Caco-2 (cell line): ENCODE measurements at regions of chr6 and their contacts with region 1.

Region 1: GRCh38 chr6:3162565-3163247 is 5.4 kb upstream of the TUBB2A start:
- DNase-seq: peak; percentile 85 to 89
- H3K4me3 ChIP-seq: peak overlapping the region; percentile 52
- H3K4me3 Mint-ChIP-seq: peak overlapping the region; percentile 78
- H3K27ac Mint-ChIP-seq: peak overlapping the region; percentile 67
- H3K4me1 ChIP-seq: peaks cover 47% of the 10 kb centered on the region
- H3K4me1 Mint-ChIP-seq: peaks cover 39% of the 10 kb centered on the region
- H3K27me3 ChIP-seq: no peaks in the 10 kb centered on the region
- H3K27me3 Mint-ChIP-seq: no peaks in the 10 kb centered on the region
- CTCF ChIP-seq: peak in 1 of 2 experiments; percentile 21

Region 2: GRCh38 chr6:2891768-2892170 is 270.9 kb before region 1 on chr6:
- CTCF ChIA-PET with region 1: no interaction called
- POLR2A ChIA-PET with region 1: no interaction called
- intact Hi-C with region 1: no loop called
- DNase-seq: peak; percentile 92 to 93
- H3K4me3 ChIP-seq: peak overlapping the region; percentile 71
- H3K4me3 Mint-ChIP-seq: peak overlapping the region; percentile 92
- H3K27ac Mint-ChIP-seq: peak overlapping the region; percentile 80
- H3K4me1 ChIP-seq: peaks cover 8% of the 10 kb centered on the region; the same call in 1 of the 2 replicates
- H3K4me1 Mint-ChIP-seq: peaks cover 10% of the 10 kb centered on the region
- H3K27me3 ChIP-seq: no peaks in the 10 kb centered on the region
- H3K27me3 Mint-ChIP-seq: no peaks in the 10 kb centered on the region
- CTCF ChIP-seq: no peak

Region 3: GRCh38 chr6:2952557-2953095 is 210.1 kb before region 1 on chr6:
- CTCF ChIA-PET with region 1: no interaction called
- POLR2A ChIA-PET with region 1: no interaction called
- intact Hi-C with region 1: no loop called
- DNase-seq: peak; percentile 60 to 67
- H3K4me3 ChIP-seq: no peak overlapping the region
- H3K4me3 Mint-ChIP-seq: no peak overlapping the region
- H3K27ac Mint-ChIP-seq: no peak overlapping the region
- H3K4me1 ChIP-seq: peaks cover 4% of the 10 kb centered on the region; the same call in 1 of the 2 replicates
- H3K4me1 Mint-ChIP-seq: peaks cover 8% of the 10 kb centered on the region
- H3K27me3 ChIP-seq: no peaks in the 10 kb centered on the region
- H3K27me3 Mint-ChIP-seq: no peaks in the 10 kb centered on the region
- CTCF ChIP-seq: peak; percentile 46 to 84

Region 4: DNA sequence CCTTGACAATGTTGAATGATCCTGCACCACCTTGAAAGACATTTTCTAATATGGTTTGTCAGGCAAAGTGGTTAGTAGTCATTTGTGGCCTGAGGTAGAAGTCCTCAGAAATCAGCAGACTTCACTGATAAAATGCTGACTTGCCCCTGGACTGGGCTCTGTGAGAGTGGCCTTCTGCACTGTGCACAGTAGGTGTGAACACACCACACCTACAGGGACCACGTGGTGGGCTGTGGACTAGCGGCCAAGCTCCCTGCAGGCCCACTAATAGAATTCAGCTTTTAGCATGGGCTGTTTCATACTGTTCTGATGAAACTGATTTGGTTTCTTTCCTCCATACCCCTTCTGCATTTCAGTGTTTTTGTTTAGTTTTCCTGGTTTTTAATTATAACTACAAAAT is 36.9 kb before region 1 on chr6:
- CTCF ChIA-PET with region 1: interaction called, 5 read pairs
- POLR2A ChIA-PET with region 1: no interaction called
- intact Hi-C with region 1: loop called (anchors 2 kb)
- DNase-seq: no peak
- H3K4me3 ChIP-seq: no peak overlapping the region
- H3K4me3 Mint-ChIP-seq: no peak overlapping the region
- H3K27ac Mint-ChIP-seq: no peak overlapping the region
- H3K4me1 ChIP-seq: peaks cover under 1% of the 10 kb centered on the region; the same call in 1 of the 2 replicates
- H3K4me1 Mint-ChIP-seq: no peaks in the 10 kb centered on the region
- H3K27me3 ChIP-seq: no peaks in the 10 kb centered on the region
- H3K27me3 Mint-ChIP-seq: no peaks in the 10 kb centered on the region
- CTCF ChIP-seq: no peak

Region 5: GRCh38 chr6:3139090-3139903 is 23.4 kb before region 1 on chr6:
- CTCF ChIA-PET with region 1: no interaction called
- POLR2A ChIA-PET with region 1: no interaction called
- intact Hi-C with region 1: loop called (anchors 1 kb)
- DNase-seq: peak; percentile 79 to 85
- H3K4me3 ChIP-seq: no peak overlapping the region
- H3K4me3 Mint-ChIP-seq: peak overlapping the region; percentile 48
- H3K27ac Mint-ChIP-seq: peak overlapping the region; percentile 70
- H3K4me1 ChIP-seq: peaks cover 42% of the 10 kb centered on the region
- H3K4me1 Mint-ChIP-seq: peaks cover 33% of the 10 kb centered on the region
- H3K27me3 ChIP-seq: no peaks in the 10 kb centered on the region
- H3K27me3 Mint-ChIP-seq: no peaks in the 10 kb centered on the region
- CTCF ChIP-seq: no peak

Region 6: DNA sequence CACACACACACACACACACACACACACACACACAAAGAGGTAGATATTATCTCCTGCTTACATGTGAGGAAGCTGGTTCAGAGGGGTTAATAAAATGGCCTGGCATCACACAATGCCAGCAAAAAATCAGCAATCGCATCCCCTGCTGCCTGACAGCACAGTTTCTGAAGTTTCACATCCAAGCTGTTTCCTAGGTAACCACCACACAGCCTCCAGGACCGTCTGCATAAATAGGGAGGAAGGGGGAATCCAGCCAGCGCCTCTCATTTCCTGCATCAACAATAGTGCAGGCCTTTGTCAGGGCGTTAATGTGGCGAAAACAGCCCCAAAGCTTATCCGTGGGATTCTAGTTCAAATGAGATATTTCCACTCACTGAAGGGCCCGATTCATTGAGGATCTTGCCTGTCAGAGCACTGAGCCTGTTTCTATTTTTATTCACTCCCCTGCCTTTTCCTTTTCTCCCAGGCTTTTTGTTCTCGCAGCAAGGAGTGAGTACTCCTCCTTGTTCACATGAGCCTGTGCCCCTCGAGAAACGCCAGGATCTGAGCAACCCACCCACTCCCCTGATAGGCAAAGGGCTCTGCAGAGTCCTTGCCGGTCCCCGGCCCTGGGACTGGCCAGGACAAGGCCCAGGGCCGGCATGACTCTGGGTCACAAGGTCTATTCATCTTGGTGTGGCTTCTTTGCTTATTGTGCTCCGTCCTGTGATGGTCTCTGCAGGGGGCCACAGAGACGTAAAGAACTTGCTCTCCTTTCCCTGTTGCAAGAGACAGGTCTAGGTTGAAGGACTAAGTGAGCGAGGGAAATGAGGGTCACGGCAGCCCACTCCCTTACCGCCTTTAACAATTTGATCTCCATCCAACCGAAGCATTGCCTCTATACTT is 32.1 kb after region 1 on chr6:
- CTCF ChIA-PET with region 1: interaction called, 9 read pairs
- POLR2A ChIA-PET with region 1: no interaction called
- intact Hi-C with region 1: loop called (anchors 2 kb)
- DNase-seq: no peak
- H3K4me3 ChIP-seq: no peak overlapping the region
- H3K4me3 Mint-ChIP-seq: no peak overlapping the region
- H3K27ac Mint-ChIP-seq: no peak overlapping the region
- H3K4me1 ChIP-seq: no peaks in the 10 kb centered on the region
- H3K4me1 Mint-ChIP-seq: no peaks in the 10 kb centered on the region
- H3K27me3 ChIP-seq: no peaks in the 10 kb centered on the region
- H3K27me3 Mint-ChIP-seq: no peaks in the 10 kb centered on the region
- CTCF ChIP-seq: no peak

Region 7: GRCh38 chr6:3209114-3210023 is 46.7 kb after region 1 on chr6:
- CTCF ChIA-PET with region 1: interaction called, 8 read pairs
- POLR2A ChIA-PET with region 1: interaction called, 4 read pairs
- intact Hi-C with region 1: loop called (anchors 1 kb)
- DNase-seq: peak; percentile 64 to 77
- H3K4me3 ChIP-seq: no peak overlapping the region
- H3K4me3 Mint-ChIP-seq: peak overlapping the region; percentile 57
- H3K27ac Mint-ChIP-seq: peak overlapping the region; percentile 10
- H3K4me1 ChIP-seq: 0 out of 2 replicates have a peak, but pooled peaks cover 6% of the 10 kb centered on the region
- H3K4me1 Mint-ChIP-seq: peaks cover 14% of the 10 kb centered on the region
- H3K27me3 ChIP-seq: no peaks in the 10 kb centered on the region
- H3K27me3 Mint-ChIP-seq: no peaks in the 10 kb centered on the region
- CTCF ChIP-seq: no peak

Region 8: DNA sequence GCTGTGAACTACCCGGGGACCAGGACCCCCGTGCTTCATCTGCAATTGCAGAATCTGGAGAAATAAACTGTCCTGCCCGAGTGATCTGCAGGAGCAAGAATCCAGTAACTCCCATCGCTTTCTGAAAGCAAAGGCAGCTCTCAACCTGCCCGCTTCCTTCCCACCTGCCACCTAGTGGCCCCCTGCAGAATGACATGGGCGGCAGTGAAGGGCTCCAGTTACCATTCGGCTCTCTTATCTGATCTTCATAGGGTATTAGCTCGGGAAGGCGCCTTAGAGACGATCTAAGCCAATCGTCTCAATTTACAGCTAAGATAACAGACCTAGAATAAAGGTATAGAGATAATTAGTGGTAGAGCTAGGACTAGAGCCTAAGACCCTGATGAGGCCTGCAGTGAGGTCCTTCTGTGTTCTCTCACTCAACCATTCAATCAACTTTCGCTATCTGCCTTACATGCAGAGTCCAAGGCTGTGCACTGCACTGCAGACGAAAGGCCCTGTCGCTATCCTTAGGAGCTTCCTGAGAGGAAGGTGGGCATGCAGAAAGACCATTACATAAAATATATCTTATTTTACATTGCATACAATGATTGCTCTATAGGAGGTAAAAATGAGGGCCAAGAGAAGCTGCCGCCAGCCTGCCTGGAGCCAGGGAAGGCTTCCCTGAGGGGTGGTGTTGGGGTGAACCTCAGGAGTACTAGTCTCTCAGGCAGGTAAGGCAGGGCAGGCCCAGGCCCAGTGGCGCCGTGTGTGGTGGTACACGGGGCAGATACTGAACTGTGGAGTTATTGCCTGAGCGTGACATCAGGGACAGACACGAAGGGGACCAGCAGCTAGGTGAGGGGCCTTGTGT is 89.0 kb after region 1 on chr6:
- CTCF ChIA-PET with region 1: interaction called, 14 read pairs
- POLR2A ChIA-PET with region 1: interaction called, 15 read pairs
- intact Hi-C with region 1: no loop called
- DNase-seq: peak; percentile 84 to 91
- H3K4me3 ChIP-seq: no peak overlapping the region
- H3K4me3 Mint-ChIP-seq: peak overlapping the region; percentile 59
- H3K27ac Mint-ChIP-seq: peak overlapping the region; percentile 31
- H3K4me1 ChIP-seq: peaks cover 18% of the 10 kb centered on the region
- H3K4me1 Mint-ChIP-seq: peaks cover 5% of the 10 kb centered on the region
- H3K27me3 ChIP-seq: no peaks in the 10 kb centered on the region; the same call in 1 of the 2 replicates
- H3K27me3 Mint-ChIP-seq: no peaks in the 10 kb centered on the region
- CTCF ChIP-seq: peak; percentile 95 to 96

Region 9: DNA sequence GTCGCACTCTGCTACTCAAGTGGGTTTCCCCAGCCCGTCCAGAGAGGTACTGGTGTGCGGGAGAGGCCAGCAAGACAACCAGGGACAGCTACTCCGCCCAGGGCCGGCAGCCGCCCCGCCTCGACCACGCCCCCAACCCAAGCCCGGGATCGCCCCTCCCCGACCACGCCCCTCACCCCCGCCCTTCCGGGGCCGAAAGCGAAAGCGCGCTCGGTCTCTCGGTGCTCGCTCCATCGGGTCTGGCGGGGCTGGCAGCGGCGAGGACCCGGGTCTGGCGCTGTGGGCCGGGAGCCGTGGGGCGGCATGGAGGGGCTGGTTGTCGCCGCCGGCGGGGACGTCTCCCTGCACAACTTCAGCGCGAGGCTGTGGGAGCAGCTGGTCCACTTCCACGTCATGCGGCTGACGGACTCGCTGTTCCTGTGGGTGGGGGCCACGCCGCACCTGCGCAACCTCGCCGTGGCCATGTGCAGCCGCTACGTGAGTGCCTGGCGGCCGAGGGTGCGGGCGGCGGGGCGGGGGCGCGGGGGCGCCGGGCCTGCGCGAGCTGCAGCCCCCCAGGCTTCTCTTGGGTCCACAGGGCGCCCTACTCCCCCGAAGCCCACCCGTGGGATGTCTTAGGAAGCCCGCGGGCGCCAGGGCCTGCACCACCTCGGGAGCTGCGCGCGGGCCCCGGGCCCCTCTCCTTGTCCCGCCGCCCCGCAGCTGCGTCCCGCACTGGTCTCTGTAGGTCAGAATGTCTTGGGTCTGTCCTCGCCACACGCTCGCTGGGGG is 96.2 kb after region 1 on chr6 and contains the start of gene PSMG4:
- CTCF ChIA-PET with region 1: no interaction called
- POLR2A ChIA-PET with region 1: interaction called, 3 read pairs
- intact Hi-C with region 1: loop called (anchors 2 kb)
- DNase-seq: peak; percentile 94 to 98
- H3K4me3 ChIP-seq: peak within 1 kb of the TSS; percentile 95
- H3K4me3 Mint-ChIP-seq: peak within 1 kb of the TSS; percentile 90
- H3K27ac Mint-ChIP-seq: peak within 1 kb of the TSS; percentile 81
- H3K4me1 ChIP-seq: no peaks in the 10 kb centered on the region; the same call in 1 of the 2 replicates
- H3K4me1 Mint-ChIP-seq: peaks cover 7% of the 10 kb centered on the region
- H3K27me3 ChIP-seq: no peaks in the 10 kb centered on the region
- H3K27me3 Mint-ChIP-seq: no peaks in the 10 kb centered on the region
- CTCF ChIP-seq: no peak
- total RNA-seq, gene PSMG4: 20.9 and 21.3 TPM in 2 replicates